Mammary epithelial cell (primary cell): ENCODE measurements at regions of chr1 and their contacts with region 1.

Region 1: DNA sequence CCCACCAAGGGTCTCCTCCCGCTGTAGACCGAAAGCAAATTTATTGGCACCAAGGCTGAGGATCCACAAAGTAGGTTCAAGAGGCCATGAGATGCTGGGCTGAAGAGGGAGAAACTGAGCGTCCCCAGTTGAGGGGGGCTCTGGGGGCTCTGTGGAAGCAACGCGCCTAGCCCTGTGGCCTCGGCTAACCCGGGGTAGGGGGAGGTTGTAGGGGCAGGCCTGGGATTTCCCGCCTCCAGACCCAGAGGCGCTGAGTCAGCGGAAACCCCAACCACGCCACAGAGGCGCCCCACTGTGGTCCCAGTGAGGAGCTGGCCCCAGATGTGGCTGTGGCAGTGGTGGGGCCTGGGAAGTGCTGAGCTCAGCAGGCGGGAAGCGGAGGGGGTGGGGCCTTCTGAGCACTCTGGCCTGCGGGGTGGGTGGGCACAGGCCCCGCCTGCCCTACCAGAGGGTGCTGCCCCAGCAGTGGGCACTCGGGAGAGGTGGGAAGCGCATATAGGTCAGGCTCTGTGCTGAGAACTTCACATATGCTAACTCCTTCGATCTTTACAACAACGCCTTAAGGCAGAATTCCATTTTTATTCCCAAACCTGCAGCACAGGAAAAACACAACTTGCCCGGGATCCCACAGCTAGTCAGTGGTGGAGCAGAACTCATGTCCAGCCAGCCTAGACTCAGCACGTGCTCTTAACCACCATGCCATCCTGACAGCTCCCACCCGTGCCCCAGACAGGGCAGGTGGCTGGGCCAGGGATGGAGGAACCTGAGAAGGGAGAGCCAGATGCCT is 1.5 kb upstream of the COL16A1 start:
- DNase-seq: peak; percentile 63
- H3K4me3 ChIP-seq: peak overlapping the region; percentile 8 to 35 (median 10)
- H3K27ac ChIP-seq: peak overlapping the region; percentile 53
- H3K4me1 ChIP-seq: peaks cover 55% of the 10 kb centered on the region
- H3K27me3 ChIP-seq: no peaks in the 10 kb centered on the region
- CTCF ChIP-seq: peak; percentile 29 to 60

Region 2: DNA sequence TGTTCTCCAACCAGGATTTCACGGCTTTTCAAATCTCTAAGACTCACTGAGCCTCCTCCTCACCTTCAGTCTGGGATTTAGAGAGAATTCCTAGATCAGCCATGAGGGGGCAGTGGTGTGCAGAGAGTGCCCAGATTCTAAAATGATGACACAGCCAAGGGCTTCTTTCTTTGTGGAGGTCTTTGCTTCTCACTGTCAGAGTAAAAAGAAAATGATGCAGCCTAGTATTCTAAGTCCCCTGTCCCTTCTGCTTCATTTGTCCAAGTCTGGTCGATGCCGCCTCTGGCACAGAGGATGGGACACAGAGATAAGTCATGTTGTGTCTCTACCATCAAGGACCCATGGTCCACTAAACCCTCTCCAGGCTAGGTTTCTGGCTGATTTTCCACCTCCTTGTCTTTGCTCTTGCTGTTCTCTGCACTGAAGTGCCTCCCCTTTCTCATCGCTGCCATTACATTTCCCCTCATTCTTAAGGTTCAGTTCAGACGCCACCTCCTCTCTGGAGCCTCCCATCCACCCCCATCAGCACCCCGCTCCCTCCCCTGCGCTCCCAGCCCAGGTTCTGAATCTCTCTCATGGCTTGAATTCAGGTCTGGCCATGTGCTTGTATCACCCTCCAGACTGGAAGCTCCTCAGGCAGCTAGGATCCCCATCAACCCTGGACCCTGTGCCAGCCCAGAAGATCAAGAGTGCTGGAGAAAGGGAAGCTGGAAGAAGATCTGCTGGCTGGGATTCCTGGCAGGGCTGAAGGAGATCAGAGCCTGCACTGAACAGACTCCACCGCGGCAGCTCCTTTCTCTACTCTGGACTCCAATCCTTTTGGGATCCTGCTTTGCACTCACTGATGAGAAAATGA is 140.9 kb before region 1 on chr1:
- CTCF ChIA-PET with region 1: no interaction called
- dilution Hi-C with region 1: no loop called
- in situ Hi-C with region 1: no loop called
- intact Hi-C with region 1: loop called (anchors 2 kb)
- DNase-seq: peak; percentile 52
- H3K4me3 ChIP-seq: no peak overlapping the region
- H3K27ac ChIP-seq: no peak overlapping the region
- H3K4me1 ChIP-seq: peaks cover 26% of the 10 kb centered on the region
- H3K27me3 ChIP-seq: no peaks in the 10 kb centered on the region
- CTCF ChIP-seq: peak; percentile 79 to 84

Region 3: DNA sequence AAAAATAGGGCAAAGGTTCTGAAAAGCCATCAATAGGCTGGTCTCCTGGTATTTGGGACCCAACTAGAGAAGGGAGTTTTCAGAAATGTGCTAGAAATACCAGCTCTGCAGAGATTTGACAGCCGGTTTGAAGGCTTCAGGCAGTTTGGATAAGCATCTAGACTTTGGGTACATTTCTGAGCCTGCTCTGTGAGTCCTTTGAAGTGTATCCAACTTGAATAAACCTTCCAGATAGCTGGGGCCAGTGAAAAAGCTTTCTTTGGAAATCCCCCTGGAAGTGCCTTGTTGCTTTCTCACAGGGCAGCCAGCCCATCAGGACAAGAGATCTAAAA is 54.2 kb before region 1 on chr1:
- CTCF ChIA-PET with region 1: no interaction called
- dilution Hi-C with region 1: loop called (anchors 5 kb)
- in situ Hi-C with region 1: no loop called
- intact Hi-C with region 1: no loop called
- DNase-seq: no peak
- H3K4me3 ChIP-seq: no peak overlapping the region
- H3K27ac ChIP-seq: no peak overlapping the region
- H3K4me1 ChIP-seq: peaks cover 11% of the 10 kb centered on the region
- H3K27me3 ChIP-seq: no peaks in the 10 kb centered on the region
- CTCF ChIP-seq: no peak

Region 4: GRCh38 chr1:31669786-31670592 is 35.3 kb before region 1 on chr1:
- CTCF ChIA-PET with region 1: interaction called, 4 read pairs
- dilution Hi-C with region 1: no loop called
- in situ Hi-C with region 1: no loop called
- intact Hi-C with region 1: loop called (anchors 1 kb)
- DNase-seq: peak; percentile 86
- H3K4me3 ChIP-seq: no peak overlapping the region
- H3K27ac ChIP-seq: peak overlapping the region; percentile 32
- H3K4me1 ChIP-seq: peaks cover 43% of the 10 kb centered on the region
- H3K27me3 ChIP-seq: no peaks in the 10 kb centered on the region
- CTCF ChIP-seq: peak; percentile 5 to 37

Region 5: GRCh38 chr1:31745096-31745945 is 40.0 kb after region 1 on chr1:
- CTCF ChIA-PET with region 1: interaction called, 13 read pairs
- dilution Hi-C with region 1: no loop called
- in situ Hi-C with region 1: no loop called
- intact Hi-C with region 1: loop called (anchors 1 kb)
- DNase-seq: peak; percentile 49
- H3K4me3 ChIP-seq: no peak overlapping the region
- H3K27ac ChIP-seq: no peak overlapping the region
- H3K4me1 ChIP-seq: no peaks in the 10 kb centered on the region
- H3K27me3 ChIP-seq: no peaks in the 10 kb centered on the region
- CTCF ChIP-seq: peak; percentile 82 to 93

Region 6: DNA sequence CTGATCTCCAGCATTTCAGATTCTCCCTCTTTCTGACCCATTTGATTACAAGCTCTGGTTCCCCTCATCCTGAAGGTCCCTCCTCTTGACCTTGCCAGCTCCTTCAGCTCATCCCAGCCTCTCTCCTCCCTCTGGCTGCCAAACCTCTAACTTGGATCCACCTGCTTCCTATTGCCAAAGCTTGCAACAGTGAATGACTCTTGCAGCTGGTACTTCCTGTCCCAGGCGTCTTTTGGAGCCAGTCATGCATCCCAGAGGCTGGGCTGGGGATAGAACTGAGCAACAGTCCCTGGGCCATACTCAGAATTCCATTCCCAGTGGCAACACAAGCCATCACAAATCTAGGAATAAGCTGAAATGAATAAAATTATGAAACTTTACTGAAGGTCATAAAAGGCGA is 138.2 kb after region 1 on chr1:
- CTCF ChIA-PET with region 1: no interaction called
- dilution Hi-C with region 1: no loop called
- in situ Hi-C with region 1: no loop called
- intact Hi-C with region 1: no loop called
- DNase-seq: peak; percentile 41
- H3K4me3 ChIP-seq: no peak overlapping the region
- H3K27ac ChIP-seq: no peak overlapping the region
- H3K4me1 ChIP-seq: peaks cover 4% of the 10 kb centered on the region
- H3K27me3 ChIP-seq: no peaks in the 10 kb centered on the region
- CTCF ChIP-seq: no peak